Activated CD4-positive, alpha-beta memory T cell treated with anti-CD3 and anti-CD28 coated beads for 36 hours (primary cell): ENCODE measurements at regions of chr1 and their contacts with region 1.

Region 1: GRCh38 chr1:234409328-234409727 is 36.1 kb downstream of the COA6 start:
- DNase-seq: peak; percentile 29
- H3K4me3 Mint-ChIP-seq: peak overlapping the region; percentile 45
- H3K27ac Mint-ChIP-seq: peak overlapping the region; percentile 84
- H3K4me1 Mint-ChIP-seq: peaks cover 32% of the 10 kb centered on the region
- H3K27me3 Mint-ChIP-seq: no peaks in the 10 kb centered on the region

Region 2: DNA sequence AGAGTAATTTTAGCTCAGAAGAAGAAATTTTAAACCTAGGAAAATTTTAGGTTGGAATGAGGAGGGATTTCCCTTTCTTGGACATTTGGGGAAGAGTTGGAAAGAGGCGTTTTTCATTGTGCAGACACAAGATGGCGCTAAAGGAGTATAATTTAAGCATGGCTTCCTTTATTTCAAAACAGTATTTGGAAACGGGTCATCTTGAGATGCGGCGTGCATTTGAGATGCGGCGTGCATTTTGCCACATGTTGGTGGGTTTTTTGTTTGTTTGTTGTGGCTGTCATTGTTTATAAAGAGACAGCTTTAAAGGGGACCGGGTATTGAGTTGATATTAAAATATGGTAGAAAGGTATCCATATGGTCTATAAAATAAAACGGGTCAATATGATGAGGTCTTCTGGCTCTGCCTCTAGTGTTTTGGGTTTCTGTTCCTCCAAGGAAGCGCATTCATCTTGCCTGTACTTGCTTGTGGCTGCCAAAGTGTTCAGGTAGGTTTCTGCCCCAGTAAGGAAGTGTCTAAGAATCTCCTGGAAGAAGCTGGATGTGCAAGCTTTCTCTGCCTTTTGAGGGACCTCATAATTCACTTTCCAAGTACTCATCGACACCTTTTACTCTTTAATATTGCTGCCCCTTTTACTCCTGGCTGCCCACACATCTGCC is 294.6 kb before region 1 on chr1:
- CTCF ChIA-PET with region 1: no interaction called
- POLR2A ChIA-PET with region 1: no interaction called
- intact Hi-C with region 1: loop called (anchors 1 kb)
- DNase-seq: peak; percentile 38
- H3K4me3 Mint-ChIP-seq: peak overlapping the region; percentile 25
- H3K27ac Mint-ChIP-seq: no peak overlapping the region
- H3K4me1 Mint-ChIP-seq: peaks cover 7% of the 10 kb centered on the region
- H3K27me3 Mint-ChIP-seq: peaks cover 15% of the 10 kb centered on the region

Region 3: DNA sequence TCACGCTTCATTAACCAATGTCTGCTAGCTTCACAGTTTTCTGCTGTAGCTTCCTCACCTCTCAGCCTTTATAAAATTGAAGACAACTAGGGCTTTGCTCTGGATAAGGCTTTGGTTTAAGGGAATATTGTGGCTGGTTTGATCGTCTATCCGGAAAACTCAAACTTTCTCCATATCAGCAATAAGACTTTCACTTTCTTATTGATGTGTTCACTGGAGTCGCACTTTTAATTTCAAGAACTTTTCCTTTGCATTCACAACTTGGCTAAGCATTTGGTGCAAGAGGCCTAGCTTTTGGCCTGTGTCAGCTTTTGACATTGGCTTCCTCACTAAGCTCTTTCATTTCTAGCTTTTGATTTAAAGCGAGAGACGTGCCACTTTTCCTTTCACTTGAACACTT is 23.2 kb before region 1 on chr1:
- CTCF ChIA-PET with region 1: no interaction called
- POLR2A ChIA-PET with region 1: no interaction called
- intact Hi-C with region 1: loop called (anchors 1 kb)
- DNase-seq: peak; percentile 18
- H3K4me3 Mint-ChIP-seq: peak overlapping the region; percentile 7
- H3K27ac Mint-ChIP-seq: peak overlapping the region; percentile 54
- H3K4me1 Mint-ChIP-seq: peaks cover 16% of the 10 kb centered on the region
- H3K27me3 Mint-ChIP-seq: no peaks in the 10 kb centered on the region

Region 4: DNA sequence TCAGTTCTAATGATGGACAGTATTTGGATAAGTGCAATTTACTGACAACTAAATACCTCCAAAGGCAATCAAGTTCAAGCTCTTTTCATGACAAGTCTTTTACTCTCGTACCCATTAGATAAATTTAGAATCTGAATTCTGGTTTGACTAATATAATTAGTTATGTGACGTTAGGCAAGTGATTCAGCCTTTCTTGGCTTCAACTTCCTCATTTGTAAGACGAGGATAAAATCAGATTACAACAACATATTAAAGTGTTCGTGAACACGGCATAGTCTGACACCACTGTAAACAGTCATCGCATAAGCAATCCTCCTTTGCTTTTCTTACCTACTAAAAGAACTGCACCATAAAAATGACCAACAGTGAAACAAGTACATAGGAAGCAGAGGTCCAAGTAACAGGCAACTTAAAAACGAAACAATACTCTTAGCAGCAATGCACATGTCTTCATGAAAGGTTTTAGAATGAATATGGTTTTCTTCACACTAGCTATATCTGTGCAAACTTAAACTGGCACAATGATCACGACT is 10.4 kb before region 1 on chr1:
- CTCF ChIA-PET with region 1: interaction called, 7 read pairs
- POLR2A ChIA-PET with region 1: no interaction called
- intact Hi-C with region 1: loop called (anchors 1 kb)
- DNase-seq: no peak
- H3K4me3 Mint-ChIP-seq: peak overlapping the region; percentile 66
- H3K27ac Mint-ChIP-seq: peak overlapping the region; percentile 92
- H3K4me1 Mint-ChIP-seq: peaks cover 53% of the 10 kb centered on the region
- H3K27me3 Mint-ChIP-seq: no peaks in the 10 kb centered on the region

Region 5: DNA sequence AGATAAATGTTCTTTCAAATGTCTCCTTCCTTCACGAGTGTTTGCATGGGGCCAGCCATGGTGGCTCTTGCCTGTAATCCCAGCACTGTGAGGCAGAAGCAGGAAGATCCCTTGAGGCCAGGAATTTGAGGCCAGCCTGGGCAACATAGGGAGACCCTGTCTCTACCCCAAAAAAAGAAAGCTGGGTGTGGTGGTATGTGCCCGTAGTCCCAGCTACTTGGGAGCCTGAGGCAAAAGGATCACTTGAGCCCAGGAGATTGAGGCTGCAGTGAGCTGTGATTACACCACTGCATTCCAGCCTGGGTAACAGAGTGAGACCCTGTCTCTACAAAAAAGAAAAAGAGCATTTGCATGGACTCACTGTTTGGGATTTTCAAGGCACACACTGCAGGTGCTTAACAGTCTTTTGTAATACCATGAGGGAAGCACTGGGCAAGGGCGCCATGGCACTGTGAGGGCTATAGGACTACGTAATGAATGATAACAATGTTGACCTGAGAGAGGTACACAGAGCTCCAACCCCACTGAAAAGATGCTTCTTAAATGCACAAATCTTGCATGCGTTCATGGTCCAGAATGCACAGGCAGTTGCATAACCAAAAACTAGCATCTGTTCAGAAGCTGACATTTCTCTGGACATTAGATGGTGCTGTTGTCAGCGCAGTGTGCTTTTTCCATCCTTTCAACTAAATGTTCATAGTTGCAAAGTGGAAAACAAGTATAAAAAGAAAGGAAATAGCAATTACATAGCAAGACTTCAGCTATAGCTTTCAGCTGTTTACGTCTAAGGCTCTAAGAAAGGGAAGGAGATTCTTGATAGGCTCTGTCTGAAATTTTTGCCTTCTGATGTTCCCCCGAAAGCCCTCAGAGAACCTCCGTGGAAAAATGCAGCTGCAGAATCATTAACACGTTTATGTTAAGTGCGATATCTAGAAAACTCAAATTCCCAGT is 77.4 kb after region 1 on chr1:
- CTCF ChIA-PET with region 1: no interaction called
- POLR2A ChIA-PET with region 1: no interaction called
- intact Hi-C with region 1: loop called (anchors 5 kb)
- DNase-seq: peak; percentile 55
- H3K4me3 Mint-ChIP-seq: no peak overlapping the region
- H3K27ac Mint-ChIP-seq: peak overlapping the region; percentile 81
- H3K4me1 Mint-ChIP-seq: peaks cover 36% of the 10 kb centered on the region
- H3K27me3 Mint-ChIP-seq: peaks cover 16% of the 10 kb centered on the region